Heart right ventricle (tissue), 16 donors: ENCODE measurements at regions of chr20 and their contacts with region 1.

Region 1: DNA sequence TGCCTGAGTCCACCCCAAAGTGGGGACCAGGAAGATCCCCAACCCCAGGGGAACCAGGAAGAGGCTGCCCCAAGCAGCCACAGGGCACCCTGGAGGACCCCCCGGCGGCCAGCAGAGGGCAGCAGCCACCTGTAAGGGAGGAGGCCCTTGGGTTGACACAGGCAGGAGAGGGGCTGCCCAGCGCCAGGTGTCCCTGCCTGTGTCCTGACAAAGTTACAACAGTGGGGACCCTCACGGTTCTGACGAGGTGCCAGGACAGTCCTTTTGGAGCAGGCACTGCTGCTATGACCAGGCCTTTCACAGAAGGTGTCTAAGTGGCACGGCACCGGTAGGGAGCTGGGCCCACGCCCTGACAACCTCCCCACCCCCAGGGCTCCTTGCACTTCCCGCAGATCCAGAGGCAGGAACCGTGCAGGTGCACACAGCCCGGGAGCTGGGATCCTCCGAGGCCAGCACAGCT is 176.7 kb downstream of the BMP7 start:
- DNase-seq: peak; percentile 35 to 73
- ATAC-seq: peak; percentile 81 to 89 (median 84)
- H3K4me3 ChIP-seq: no peak overlapping the region
- H3K27ac ChIP-seq: no peak overlapping the region
- H3K4me1 ChIP-seq: peaks cover 0 to 5% (median 0%) of the 10 kb centered on the region in 9 donors
- H3K27me3 ChIP-seq: peaks cover 0 to 43% (median 13%) of the 10 kb centered on the region in 7 donors
- CTCF ChIP-seq: peak; percentile 72 to 96 (median 87)

Region 2: DNA sequence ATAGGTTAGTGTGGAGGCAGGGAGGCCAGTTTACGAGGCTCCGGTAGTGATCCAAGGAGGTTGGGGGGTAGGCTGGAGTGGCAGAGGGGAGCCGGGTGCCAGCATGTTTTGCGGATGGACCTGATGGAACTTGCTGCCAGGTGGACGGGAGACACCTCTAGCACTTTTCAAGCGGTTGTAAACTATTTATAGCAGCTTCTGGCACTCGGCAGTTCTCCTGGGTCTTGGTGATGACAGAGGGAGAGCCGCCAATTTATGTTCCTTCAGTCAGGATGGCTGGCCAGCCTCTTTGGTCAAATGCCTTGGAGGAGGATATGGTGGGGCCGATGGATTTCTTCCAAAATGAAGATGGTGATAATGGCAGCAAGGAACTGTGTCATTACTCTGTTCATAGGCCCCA is 431.8 kb before region 1 on chr20:
- intact Hi-C with region 1: no loop called
- DNase-seq: no peak
- ATAC-seq: peak in 1 of 8 donors; percentile 17
- H3K4me3 ChIP-seq: no peak overlapping the region
- H3K27ac ChIP-seq: no peak overlapping the region
- H3K4me1 ChIP-seq: no peaks in the 10 kb centered on the region
- H3K27me3 ChIP-seq: peaks cover 0 to 37% (median 0%) of the 10 kb centered on the region in 7 donors
- CTCF ChIP-seq: no peak

Region 3: DNA sequence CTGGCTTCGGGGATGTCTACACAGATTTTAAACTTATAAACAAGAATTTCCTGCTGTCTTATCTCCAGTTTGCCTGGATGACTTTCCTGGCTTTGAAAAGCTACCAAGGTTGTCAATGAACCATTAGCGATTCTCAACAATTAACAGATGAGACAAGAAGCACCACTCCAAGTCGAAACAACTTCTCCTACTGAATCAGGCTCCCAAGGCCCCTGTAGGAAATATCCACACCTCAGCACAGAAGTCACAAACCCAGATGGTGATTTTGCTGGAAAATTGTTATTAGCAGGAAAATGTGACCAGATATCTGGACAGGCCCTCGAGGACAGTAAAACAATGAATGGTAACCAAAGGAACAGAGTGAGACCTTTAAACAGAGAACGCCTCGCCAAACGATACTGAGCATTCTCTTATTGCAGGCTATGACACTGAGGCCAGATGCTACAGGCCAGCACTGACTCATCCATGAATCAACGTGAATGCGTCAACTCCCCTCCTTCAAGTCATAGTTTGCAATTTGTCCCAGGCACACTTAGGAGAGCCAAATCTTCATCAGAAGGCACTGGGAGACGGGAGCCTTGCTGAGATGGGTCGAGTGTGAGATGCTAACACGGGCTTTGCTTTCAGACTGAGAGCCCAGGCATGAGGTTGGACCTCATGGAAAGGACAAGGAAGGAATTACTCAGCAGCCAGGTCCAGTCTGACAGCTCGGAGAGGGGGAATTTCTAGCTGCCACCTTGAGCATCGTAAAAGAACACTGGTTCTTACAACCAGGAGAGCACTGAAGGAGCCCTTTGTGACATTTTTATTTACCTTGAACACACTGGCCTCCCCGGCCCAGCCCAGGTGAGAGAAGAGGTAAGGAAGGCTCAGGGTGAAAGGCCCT is 115.9 kb after region 1 on chr20:
- intact Hi-C with region 1: loop called in 2 of 10 experiments (anchors 2 to 10 kb)
- DNase-seq: no peak
- ATAC-seq: no peak
- H3K4me3 ChIP-seq: no peak overlapping the region
- H3K27ac ChIP-seq: no peak overlapping the region
- H3K4me1 ChIP-seq: peaks cover 0 to 3% (median 0%) of the 10 kb centered on the region in 9 donors
- H3K27me3 ChIP-seq: peaks cover 0 to 6% (median 0%) of the 10 kb centered on the region in 7 donors
- CTCF ChIP-seq: no peak

Region 4: GRCh38 chr20:57329608-57330221 is 240.0 kb after region 1 on chr20 and contains the start of gene SPO11:
- intact Hi-C with region 1: loop called in 3 of 10 experiments (anchors 5 kb)
- DNase-seq: no peak
- ATAC-seq: peak in 2 of 8 donors; percentile 50 to 61
- H3K4me3 ChIP-seq: no peak within 1 kb of the TSS
- H3K27ac ChIP-seq: no peak within 1 kb of the TSS
- H3K4me1 ChIP-seq: no peaks in the 10 kb centered on the region
- H3K27me3 ChIP-seq: peaks cover 0 to 70% (median 59%) of the 10 kb centered on the region in 7 donors
- CTCF ChIP-seq: peak in 7 of 9 donors; percentile 13 to 46 (median 32)
- total RNA-seq, gene SPO11: not detected

Region 5: DNA sequence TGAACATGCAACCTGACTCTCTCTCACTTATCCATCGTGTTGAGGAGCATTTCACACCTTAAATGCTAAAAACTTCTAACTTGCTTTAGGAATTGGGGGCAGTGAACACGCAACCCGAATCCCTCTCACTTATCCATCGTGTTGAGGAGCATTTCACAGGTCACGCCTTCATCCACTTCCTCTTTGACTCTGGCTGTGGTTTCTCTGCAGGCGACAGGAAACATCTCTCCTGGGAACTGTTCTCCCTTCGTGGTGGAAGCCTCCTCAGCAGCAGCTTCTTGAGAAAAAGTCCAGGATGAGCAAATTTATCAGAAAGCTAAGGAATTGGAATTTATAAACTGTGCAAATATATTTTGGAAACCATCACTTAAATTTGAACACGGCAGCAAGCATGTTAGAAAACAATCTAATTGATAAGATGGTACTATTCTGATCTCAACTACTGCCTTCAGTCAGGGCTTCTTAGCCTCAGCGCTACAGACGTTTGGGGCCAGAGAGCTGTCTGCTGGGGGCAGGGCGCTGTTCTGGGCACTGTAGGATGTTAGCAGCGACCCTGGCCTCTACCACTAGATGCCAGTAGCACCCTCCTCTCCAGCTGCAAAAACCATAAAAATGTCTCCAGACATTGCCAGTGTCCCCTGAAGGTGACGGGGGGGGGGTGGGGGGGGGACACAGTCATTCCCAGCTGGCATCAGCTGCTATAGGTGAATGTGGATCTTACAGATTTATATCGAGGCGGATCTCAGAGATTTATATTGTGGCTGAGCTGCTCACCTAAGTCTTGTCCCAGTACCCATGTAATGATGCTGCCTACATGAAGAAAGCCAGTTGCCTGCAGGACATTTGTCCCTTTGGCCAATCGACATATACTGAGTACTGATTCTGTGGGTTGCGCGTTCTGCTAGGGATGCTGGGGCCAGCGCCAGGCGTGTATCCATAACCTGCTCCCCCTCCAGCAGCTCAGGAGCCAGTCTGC is 409.0 kb after region 1 on chr20:
- intact Hi-C with region 1: loop called in 2 of 10 experiments (anchors 10 kb)
- DNase-seq: no peak
- ATAC-seq: peak in 3 of 8 donors; percentile 50 to 66 (median 53)
- H3K4me3 ChIP-seq: no peak overlapping the region
- H3K27ac ChIP-seq: no peak overlapping the region
- H3K4me1 ChIP-seq: peaks cover 0 to 38% (median 16%) of the 10 kb centered on the region in 9 donors
- H3K27me3 ChIP-seq: peaks cover 0 to 67% (median 4%) of the 10 kb centered on the region in 7 donors
- CTCF ChIP-seq: peak in 5 of 9 donors; percentile 22 to 41 (median 32)